Lower leg skin (tissue), 4 donors: ENCODE measurements at regions of chr3 and their contacts with region 1.

Region 1: DNA sequence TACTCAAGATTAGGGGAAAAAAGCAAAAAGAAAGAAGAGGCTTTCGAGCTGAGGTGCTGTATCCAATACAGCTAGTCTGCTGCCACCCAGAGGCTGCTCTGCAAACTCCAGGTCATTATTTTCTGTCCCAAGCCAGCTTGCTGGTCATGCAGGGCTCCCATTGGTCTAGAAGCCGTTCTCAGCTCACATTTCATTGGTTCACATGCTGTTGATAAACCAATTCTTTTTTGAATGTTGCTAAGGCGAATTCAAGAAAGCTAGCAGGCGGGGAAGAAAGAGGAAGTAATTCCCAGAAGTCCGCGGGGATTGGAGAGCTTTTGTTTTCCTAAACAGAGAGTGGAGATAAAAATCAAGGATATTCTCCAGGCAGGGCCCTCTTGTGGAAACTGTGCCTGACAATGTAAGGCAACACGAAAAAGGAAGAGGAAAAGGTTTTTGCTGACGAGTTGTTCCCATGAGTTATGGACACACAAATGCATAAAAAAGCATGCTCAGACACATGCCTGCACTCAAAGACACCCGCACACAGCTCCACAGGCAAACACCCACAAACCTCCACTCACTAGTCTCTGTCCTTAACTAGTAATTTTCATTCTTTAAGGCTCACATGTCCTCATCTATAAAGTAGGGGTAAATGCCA is 33.4 kb downstream of the FSTL1 start:
- DNase-seq: peak; percentile 94 to 97
- H3K4me3 ChIP-seq: no peak overlapping the region
- CTCF ChIP-seq: peak in 1 of 3 donors; percentile 71
- POLR2A ChIP-seq: no peak

Region 2: GRCh38 chr3:120239644-120240043 is 177.7 kb before region 1 on chr3:
- intact Hi-C with region 1: loop called (anchors 5 kb)
- DNase-seq: no peak
- H3K4me3 ChIP-seq: no peak overlapping the region
- CTCF ChIP-seq: no peak
- POLR2A ChIP-seq: no peak

Region 3: DNA sequence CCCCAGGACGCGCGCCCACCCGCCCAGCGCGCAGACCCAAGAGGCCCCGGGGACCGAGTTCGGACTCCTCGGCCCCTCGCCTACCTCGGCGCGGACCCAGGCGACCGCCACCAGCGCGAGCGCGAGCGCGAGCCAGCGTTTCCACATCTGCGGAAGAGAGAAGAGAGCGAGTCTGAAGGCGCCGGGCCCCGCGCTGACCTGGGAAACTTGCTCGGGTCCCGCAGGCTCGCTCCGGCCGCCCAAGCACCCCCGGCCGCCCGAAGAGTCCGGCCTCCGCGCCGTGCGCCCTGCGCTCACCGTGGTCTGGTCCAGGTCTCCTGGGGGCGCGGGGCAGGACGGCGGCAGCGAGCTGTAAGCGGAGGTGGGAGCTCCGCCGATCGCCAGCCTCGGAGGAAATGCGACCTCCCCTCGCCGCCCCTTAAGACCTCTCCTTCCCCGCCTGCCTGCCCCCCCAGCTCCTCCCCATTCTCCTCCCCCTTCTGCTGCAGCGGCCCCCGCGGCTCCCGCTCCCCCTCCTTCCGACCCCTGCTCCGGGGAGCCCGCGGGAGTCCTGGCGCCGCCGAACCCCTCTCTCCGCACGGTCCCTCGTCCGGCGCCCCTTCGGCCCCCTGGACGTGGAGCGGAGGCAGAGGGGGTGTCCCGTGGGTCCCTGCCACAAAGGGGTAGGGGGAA is 33.3 kb after region 1 on chr3 and contains the start of gene FSTL1:
- intact Hi-C with region 1: no loop called
- DNase-seq: peak; percentile 38 to 93
- H3K4me3 ChIP-seq: peak within 1 kb of the TSS; percentile 84
- CTCF ChIP-seq: no peak
- POLR2A ChIP-seq: peak in 1 of 2 donors; percentile 27
- total RNA-seq, gene FSTL1: 52.8 to 207 (median 104) TPM